Motor neuron (in vitro differentiated cells): ENCODE measurements at regions of chr18 and their contacts with region 1.

Region 1: DNA sequence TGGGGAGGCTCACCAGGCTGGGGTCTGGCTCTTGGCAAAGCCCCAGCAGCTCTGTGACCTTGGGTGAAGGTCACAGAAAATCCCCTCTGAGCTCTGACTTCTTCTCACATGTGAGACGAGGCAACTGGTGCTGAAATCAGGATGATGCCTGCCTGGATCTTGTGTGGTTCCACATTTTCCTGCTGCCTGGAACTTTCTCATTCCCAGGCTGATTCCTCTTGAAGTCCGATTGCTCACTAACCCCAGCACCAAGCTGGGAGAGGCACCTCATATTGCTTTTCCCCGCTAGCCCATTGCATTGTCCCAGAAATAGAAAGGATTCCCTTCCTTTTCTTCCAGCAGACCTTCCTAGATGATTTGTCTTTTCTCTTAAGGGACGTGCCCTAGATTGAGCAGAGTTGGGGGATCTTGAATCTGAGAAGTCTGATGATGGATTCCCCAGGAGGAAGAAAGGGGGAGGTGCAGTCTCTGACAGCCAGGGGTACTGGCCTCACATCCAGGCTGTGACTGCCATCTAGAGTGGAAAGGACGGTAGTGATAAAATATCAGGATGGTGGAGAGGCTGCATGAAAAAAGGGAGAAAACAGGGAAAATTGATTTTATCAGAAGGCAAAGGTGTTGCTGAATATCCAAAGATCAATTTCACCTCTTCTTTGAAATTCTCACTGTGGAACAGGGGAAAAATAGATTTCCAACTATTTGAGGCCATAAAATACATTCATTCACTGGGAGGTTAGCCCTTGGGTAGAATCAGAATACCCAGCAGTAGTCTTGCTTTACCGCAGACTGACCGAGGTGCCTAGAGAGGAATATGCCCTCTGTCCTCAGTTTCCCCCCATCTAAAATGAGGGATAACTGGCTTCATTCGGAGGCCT is 96.3 kb downstream of the FAM210A start:
- ATAC-seq: peak; percentile 97 to 99 (median 98)
- H3K4me3 ChIP-seq: no peak overlapping the region
- H3K27ac ChIP-seq: no peak overlapping the region
- H3K4me1 ChIP-seq: peaks cover 4% of the 10 kb centered on the region in 2 donors

Region 2: GRCh38 chr18:13558124-13558523 is 72.0 kb before region 1 on chr18:
- in situ Hi-C with region 1: loop called in 1 of 9 experiments (anchors 10 kb)
- ATAC-seq: peak; percentile 50 to 97 (median 79)
- H3K4me3 ChIP-seq: no peak overlapping the region
- H3K27ac ChIP-seq: no peak overlapping the region
- H3K4me1 ChIP-seq: peaks cover 3 to 6% of the 10 kb centered on the region in 2 donors

Region 3: DNA sequence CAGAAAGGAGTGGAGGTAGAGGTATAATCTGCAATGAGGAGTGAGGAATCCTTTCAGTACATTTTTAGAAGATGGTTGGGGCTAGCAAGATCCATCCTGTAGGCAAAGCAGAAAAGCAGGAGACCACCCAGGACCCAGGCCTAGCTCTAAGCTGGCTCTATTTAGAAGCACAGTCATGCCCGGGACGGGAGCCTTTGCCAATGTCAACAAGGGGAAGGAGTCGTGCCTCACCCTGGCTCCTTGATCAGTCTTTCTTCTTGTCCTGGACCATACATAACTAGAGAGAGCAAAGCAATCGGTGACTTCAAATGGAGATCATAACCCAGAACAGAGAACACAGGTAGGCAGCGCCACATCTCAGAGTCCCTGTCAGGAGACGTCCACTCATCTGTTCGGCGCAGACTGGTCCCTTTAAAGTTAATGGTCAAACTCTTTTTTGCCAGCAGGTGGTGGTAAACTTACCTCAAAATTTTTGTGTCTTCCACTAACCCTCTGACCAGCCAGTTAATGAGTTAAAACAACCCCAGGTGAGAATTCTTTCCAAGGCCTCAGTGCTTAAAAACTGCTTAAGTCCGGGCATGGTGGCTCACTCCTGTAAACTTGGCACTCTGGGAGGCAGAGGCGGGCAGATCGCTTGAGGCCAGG is 201.9 kb after region 1 on chr18:
- in situ Hi-C with region 1: no loop called
- ATAC-seq: no peak
- H3K4me3 ChIP-seq: no peak overlapping the region
- H3K27ac ChIP-seq: no peak overlapping the region
- H3K4me1 ChIP-seq: no peaks in the 10 kb centered on the region